ENCODE measurements at regions of chr17 and their contacts with region 1.

Region 1: GRCh38 chr17:73710095-73710592 is 65.9 kb upstream of the SDK2 start:
- DNase-seq: peak; percentile 78 to 86
- H3K4me3 ChIP-seq: no peak overlapping the region
- H3K27ac ChIP-seq: no peak overlapping the region
- H3K4me1 ChIP-seq: no peaks in the 10 kb centered on the region
- H3K27me3 ChIP-seq: no peaks in the 10 kb centered on the region
- CTCF ChIP-seq: peak; percentile 62 to 91 (median 86)
- POLR2A ChIP-seq: no peak

Region 2: GRCh38 chr17:73429440-73430164 is 280.5 kb before region 1 on chr17:
- intact Hi-C with region 1: loop called (anchors 2 kb)
- DNase-seq: peak; percentile 79 to 87
- H3K4me3 ChIP-seq: no peak overlapping the region
- H3K27ac ChIP-seq: no peak overlapping the region
- H3K4me1 ChIP-seq: peaks cover 0 to 4% of the 10 kb centered on the region in 2 donors
- H3K27me3 ChIP-seq: no peaks in the 10 kb centered on the region
- CTCF ChIP-seq: peak; percentile 81 to 97 (median 94)
- POLR2A ChIP-seq: no peak

Region 3: GRCh38 chr17:73595479-73595878 is 114.7 kb before region 1 on chr17:
- intact Hi-C with region 1: loop called (anchors 10 kb)
- DNase-seq: peak; percentile 20 to 48
- H3K4me3 ChIP-seq: no peak overlapping the region
- H3K27ac ChIP-seq: no peak overlapping the region
- H3K4me1 ChIP-seq: no peaks in the 10 kb centered on the region
- H3K27me3 ChIP-seq: no peaks in the 10 kb centered on the region
- CTCF ChIP-seq: peak in 4 of 6 experiments; percentile 15 to 51 (median 46)
- POLR2A ChIP-seq: no peak

Region 4: DNA sequence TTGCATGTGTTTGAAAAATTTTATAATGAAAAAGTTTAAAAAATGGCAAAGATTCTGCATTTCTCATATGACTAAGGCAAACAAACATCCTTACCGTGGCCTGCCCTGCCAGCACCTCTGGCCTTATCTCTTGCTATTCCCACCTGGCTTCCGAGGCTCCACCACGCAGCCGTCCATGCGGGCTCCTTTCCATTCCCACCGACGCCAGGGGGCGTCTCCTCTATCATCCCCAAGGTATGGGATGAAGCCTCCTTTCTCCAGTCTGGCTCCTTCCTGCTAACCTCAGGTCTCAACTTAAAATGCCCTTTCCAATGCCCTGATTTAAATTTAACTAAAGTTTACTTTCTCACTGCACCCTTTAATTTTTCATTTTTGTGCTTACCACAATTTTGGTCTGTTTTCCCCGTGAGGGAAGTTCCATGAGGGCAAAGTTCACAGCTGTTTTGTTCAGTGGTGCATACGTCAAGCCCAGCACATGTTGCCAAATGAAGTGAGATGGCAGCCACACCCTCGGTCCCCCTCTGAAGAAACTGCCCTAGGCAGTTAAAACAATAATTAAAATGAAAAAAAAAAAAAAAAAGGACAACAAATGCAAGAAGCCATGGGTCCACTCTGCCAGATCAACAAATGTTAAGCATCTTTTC is 52.5 kb before region 1 on chr17:
- intact Hi-C with region 1: loop called (anchors 5 kb)
- DNase-seq: peak; percentile 38 to 53
- H3K4me3 ChIP-seq: no peak overlapping the region
- H3K27ac ChIP-seq: no peak overlapping the region
- H3K4me1 ChIP-seq: peaks cover 0 to 9% of the 10 kb centered on the region in 2 donors
- H3K27me3 ChIP-seq: no peaks in the 10 kb centered on the region
- CTCF ChIP-seq: peak in 4 of 6 experiments; percentile 14 to 51 (median 34)
- POLR2A ChIP-seq: no peak